PC-3 (cell line): ENCODE measurements at regions of chr12 and their contacts with region 1.

Region 1: GRCh38 chr12:105420659-105421240 is 90.3 kb downstream of the C12orf75 start:
- DNase-seq: peak; percentile 90
- ATAC-seq: peak; percentile 84
- H3K4me3 ChIP-seq: no peak overlapping the region
- H3K27ac ChIP-seq: no peak overlapping the region
- H3K4me1 ChIP-seq: peaks cover 9% of the 10 kb centered on the region
- H3K27me3 ChIP-seq: no peaks in the 10 kb centered on the region
- CTCF ChIP-seq: peak; percentile 98

Region 2: GRCh38 chr12:105451211-105451610 is 30.5 kb after region 1 on chr12:
- CTCF ChIA-PET with region 1: no interaction called
- POLR2A ChIA-PET with region 1: no interaction called
- intact Hi-C with region 1: loop called (anchors 1 kb)
- DNase-seq: no peak
- ATAC-seq: no peak
- H3K4me3 ChIP-seq: no peak overlapping the region
- H3K27ac ChIP-seq: no peak overlapping the region
- H3K4me1 ChIP-seq: peaks cover 11% of the 10 kb centered on the region
- H3K27me3 ChIP-seq: no peaks in the 10 kb centered on the region
- CTCF ChIP-seq: no peak

Region 3: GRCh38 chr12:105504286-105504685 is 83.5 kb after region 1 on chr12:
- CTCF ChIA-PET with region 1: no interaction called
- POLR2A ChIA-PET with region 1: no interaction called
- intact Hi-C with region 1: loop called (anchors 5 kb)
- DNase-seq: no peak
- ATAC-seq: no peak
- H3K4me3 ChIP-seq: no peak overlapping the region
- H3K27ac ChIP-seq: no peak overlapping the region
- H3K4me1 ChIP-seq: peaks cover 22% of the 10 kb centered on the region
- H3K27me3 ChIP-seq: peaks cover 10% of the 10 kb centered on the region; the same call in 1 of the 2 replicates
- CTCF ChIP-seq: peak; percentile 47

Region 4: GRCh38 chr12:105705765-105706164 is 285.0 kb after region 1 on chr12:
- CTCF ChIA-PET with region 1: no interaction called
- POLR2A ChIA-PET with region 1: no interaction called
- intact Hi-C with region 1: loop called (anchors 2 kb)
- DNase-seq: peak; percentile 61
- ATAC-seq: peak; percentile 46
- H3K4me3 ChIP-seq: no peak overlapping the region
- H3K27ac ChIP-seq: no peak overlapping the region
- H3K4me1 ChIP-seq: peaks cover 22% of the 10 kb centered on the region
- H3K27me3 ChIP-seq: no peaks in the 10 kb centered on the region
- CTCF ChIP-seq: peak; percentile 97

Region 5: DNA sequence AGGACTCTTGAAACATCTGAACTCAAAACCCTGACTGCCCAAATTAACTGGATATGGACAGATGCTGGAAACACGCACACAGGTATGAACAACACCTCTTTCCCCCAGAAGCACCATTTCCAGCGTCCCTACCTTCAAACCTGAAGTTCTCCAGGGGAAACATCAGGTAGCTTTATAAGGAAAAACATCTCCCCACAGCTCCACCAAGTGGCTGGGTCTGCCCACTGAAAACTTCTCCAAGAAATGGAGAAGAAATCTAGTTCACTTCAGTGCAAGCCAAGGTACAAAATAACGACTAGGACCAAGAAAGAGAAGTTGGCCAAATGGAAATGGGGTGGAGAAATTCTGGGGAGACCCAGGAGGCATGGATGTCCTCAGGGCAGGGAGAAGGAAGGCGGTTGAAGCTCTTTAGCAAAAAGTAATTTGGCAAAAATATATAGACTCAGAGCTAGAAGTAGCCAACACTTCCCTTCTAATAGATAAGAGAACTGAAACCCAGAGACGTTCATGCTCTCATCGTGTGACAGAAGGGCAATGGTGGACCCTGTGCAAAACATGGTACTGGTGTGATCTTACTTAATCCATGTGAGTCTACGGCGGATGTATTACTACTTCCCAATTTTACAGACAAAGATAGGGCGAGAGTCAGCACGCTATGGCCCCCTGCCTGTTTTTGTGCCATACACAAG is 728.5 kb after region 1 on chr12:
- CTCF ChIA-PET with region 1: interaction called, 15 read pairs
- POLR2A ChIA-PET with region 1: no interaction called
- intact Hi-C with region 1: loop called (anchors 1 kb)
- DNase-seq: peak; percentile 71
- ATAC-seq: peak; percentile 90
- H3K4me3 ChIP-seq: no peak overlapping the region
- H3K27ac ChIP-seq: no peak overlapping the region
- H3K4me1 ChIP-seq: no peaks in the 10 kb centered on the region
- H3K27me3 ChIP-seq: no peaks in the 10 kb centered on the region
- CTCF ChIP-seq: peak; percentile 92

Region 6: GRCh38 chr12:106205208-106206071 is 784.7 kb after region 1 on chr12:
- CTCF ChIA-PET with region 1: no interaction called
- POLR2A ChIA-PET with region 1: no interaction called
- intact Hi-C with region 1: loop called (anchors 5 kb)
- DNase-seq: peak; percentile 75
- ATAC-seq: peak; percentile 88
- H3K4me3 ChIP-seq: no peak overlapping the region
- H3K27ac ChIP-seq: no peak overlapping the region
- H3K4me1 ChIP-seq: no peaks in the 10 kb centered on the region
- H3K27me3 ChIP-seq: no peaks in the 10 kb centered on the region; the same call in 1 of the 2 replicates
- CTCF ChIP-seq: peak; percentile 72

Region 7: GRCh38 chr12:106223485-106224354 is 803.0 kb after region 1 on chr12:
- CTCF ChIA-PET with region 1: interaction called, 9 read pairs
- POLR2A ChIA-PET with region 1: no interaction called
- intact Hi-C with region 1: loop called (anchors 1 kb)
- DNase-seq: peak; percentile 89
- ATAC-seq: peak; percentile 80
- H3K4me3 ChIP-seq: no peak overlapping the region
- H3K27ac ChIP-seq: no peak overlapping the region
- H3K4me1 ChIP-seq: peaks cover 11% of the 10 kb centered on the region
- H3K27me3 ChIP-seq: no peaks in the 10 kb centered on the region
- CTCF ChIP-seq: peak; percentile 94